CD4-positive, alpha-beta memory T cell (primary cell): ENCODE measurements at regions of chr7 and their contacts with region 1.

Region 1: DNA sequence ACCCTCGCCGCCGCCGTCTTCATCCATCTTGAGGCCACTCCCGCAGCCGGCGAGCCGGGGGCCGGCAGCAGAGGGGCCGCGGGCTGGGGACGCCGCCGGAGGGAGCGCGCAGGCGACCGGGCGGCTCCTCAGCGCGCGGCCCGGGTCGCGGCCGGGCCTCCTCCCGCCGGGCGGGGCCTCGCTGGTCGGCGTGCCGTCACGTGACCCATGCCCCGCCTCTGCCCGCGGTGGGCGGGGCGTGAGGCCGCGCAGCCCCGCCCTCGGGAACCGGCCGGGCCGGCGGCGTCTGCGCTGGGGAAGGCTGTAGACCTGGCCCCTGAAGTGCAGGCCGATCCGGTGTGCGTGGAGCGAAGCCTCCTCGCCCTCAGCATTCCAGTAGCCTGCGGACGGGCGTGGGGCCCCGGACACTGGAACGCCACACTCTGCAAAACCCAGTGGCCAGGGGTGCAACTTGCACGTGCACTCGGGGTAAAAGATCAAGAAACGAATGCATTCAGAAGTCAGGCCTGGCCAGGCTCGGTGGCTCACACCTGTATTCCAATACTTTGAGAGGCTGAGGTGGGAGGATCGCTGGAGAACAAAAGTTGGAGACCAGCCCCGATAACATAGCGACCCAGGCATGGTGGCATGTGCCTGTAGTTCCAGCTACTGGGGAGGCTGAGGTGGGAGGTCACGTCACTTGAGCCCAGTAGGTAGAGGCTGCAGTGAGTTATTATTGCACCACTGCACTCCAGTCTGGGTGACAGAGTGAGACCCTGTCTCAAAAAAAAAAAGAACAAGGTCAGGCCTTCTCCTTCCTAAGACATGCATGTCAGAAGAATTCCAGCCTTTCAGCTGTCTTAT is at the start of gene CYTH3:
- DNase-seq: peak; percentile 59 to 85 (median 77)
- H3K4me3 ChIP-seq: peak within 1 kb of the TSS; percentile 52 to 60
- H3K4me3 Mint-ChIP-seq: peak within 1 kb of the TSS; percentile 89 to 94 (median 93)
- H3K27ac ChIP-seq: peak within 1 kb of the TSS; percentile 34
- H3K27ac Mint-ChIP-seq: peak within 1 kb of the TSS; percentile 71 to 94 (median 81)
- H3K4me1 ChIP-seq: peaks cover 28% of the 10 kb centered on the region
- H3K4me1 Mint-ChIP-seq: peaks cover 15 to 37% (median 25%) of the 10 kb centered on the region in 4 donors
- H3K27me3 ChIP-seq: peaks cover 7% of the 10 kb centered on the region
- H3K27me3 Mint-ChIP-seq: peaks cover 6 to 8% of the 10 kb centered on the region in 2 donors
- total RNA-seq, gene CYTH3: 6.6 to 7.8 TPM

Region 2: GRCh38 chr7:5838761-5839500 is 433.8 kb before region 1 on chr7:
- CTCF ChIA-PET with region 1: no interaction called
- POLR2A ChIA-PET with region 1: no interaction called
- intact Hi-C with region 1: no loop called
- DNase-seq: no peak
- H3K4me3 ChIP-seq: no peak overlapping the region
- H3K4me3 Mint-ChIP-seq: peak overlapping the region; percentile 35 to 84 (median 58)
- H3K27ac ChIP-seq: no peak overlapping the region
- H3K27ac Mint-ChIP-seq: peak overlapping the region; percentile 31 to 96 (median 85)
- H3K4me1 ChIP-seq: peaks cover 40% of the 10 kb centered on the region
- H3K4me1 Mint-ChIP-seq: peaks cover 23 to 40% (median 27%) of the 10 kb centered on the region in 4 donors
- H3K27me3 ChIP-seq: no peaks in the 10 kb centered on the region
- H3K27me3 Mint-ChIP-seq: no peaks in the 10 kb centered on the region

Region 3: DNA sequence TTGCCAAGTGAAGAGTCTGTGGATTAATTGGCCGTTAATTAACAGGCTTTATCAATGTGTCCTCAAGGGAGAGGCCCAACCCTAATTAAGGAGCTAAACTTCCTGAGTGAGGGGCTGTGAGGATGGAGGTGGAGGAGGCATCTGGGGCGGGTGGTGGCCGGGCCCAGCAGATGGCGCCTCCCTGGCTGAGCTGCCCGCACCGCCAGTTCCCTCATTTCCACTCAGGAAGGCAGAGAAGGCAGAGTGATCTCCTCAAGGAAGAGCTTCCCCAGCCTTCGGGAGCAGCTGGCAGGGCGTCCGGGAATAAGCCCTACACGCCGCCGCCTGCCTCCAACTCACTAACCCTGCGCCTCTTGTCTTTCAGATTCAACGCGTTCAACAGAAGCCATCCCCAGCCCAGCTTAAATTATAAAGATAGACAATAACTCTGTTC is 112.5 kb before region 1 on chr7:
- CTCF ChIA-PET with region 1: no interaction called
- POLR2A ChIA-PET with region 1: no interaction called
- intact Hi-C with region 1: loop called (anchors 5 kb)
- DNase-seq: peak in 1 of 5 donors; percentile 10
- H3K4me3 ChIP-seq: no peak overlapping the region
- H3K4me3 Mint-ChIP-seq: no peak overlapping the region
- H3K27ac ChIP-seq: no peak overlapping the region
- H3K27ac Mint-ChIP-seq: peak overlapping the region in 1 of 7 donors; percentile 18
- H3K4me1 ChIP-seq: no peaks in the 10 kb centered on the region
- H3K4me1 Mint-ChIP-seq: peaks cover 3 to 12% (median 6%) of the 10 kb centered on the region in 4 donors
- H3K27me3 ChIP-seq: no peaks in the 10 kb centered on the region
- H3K27me3 Mint-ChIP-seq: no peaks in the 10 kb centered on the region

Region 4: GRCh38 chr7:6260291-6261187 is 12.2 kb before region 1 on chr7:
- CTCF ChIA-PET with region 1: interaction called, 16 read pairs
- POLR2A ChIA-PET with region 1: interaction called, 8 read pairs
- intact Hi-C with region 1: no loop called
- DNase-seq: no peak
- H3K4me3 ChIP-seq: no peak overlapping the region
- H3K4me3 Mint-ChIP-seq: peak overlapping the region in 2 of 8 donors; percentile 2 to 5
- H3K27ac ChIP-seq: no peak overlapping the region
- H3K27ac Mint-ChIP-seq: peak overlapping the region in 5 of 7 donors; percentile 47 to 83 (median 82)
- H3K4me1 ChIP-seq: peaks cover 40% of the 10 kb centered on the region
- H3K4me1 Mint-ChIP-seq: peaks cover 32 to 59% (median 49%) of the 10 kb centered on the region in 4 donors
- H3K27me3 ChIP-seq: no peaks in the 10 kb centered on the region
- H3K27me3 Mint-ChIP-seq: no peaks in the 10 kb centered on the region

Region 5: DNA sequence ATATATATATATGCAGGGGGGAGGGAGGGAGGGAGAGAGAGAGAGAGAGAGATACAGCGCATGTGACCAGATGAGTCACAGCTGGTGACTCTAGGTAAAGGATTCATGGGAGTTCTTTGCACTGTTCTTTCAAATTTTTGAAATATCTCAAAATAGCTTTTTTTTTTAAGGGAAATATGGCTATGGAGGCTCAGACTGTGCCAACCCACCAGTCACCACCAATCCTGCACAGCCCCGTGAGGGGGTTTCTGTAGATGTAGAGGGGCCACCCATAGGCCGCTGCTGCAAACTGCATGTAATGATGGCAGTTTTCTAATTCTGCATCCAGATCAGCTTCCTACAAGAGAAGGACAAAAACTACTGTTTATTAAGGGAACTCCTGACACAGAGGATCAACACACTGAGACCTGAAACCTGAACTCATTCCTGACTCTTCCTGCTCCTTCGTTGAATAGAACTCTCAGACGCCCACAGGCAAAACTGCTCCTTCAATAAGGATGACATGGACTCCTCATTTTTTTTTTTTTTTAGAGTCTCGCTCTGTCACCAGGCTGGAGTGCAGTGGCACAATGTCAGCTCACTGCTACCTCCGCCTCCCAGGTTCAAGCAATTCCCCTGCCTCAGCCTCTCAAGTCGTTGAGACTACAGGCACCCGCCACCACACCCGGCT is 157.7 kb after region 1 on chr7:
- CTCF ChIA-PET with region 1: no interaction called
- POLR2A ChIA-PET with region 1: no interaction called
- intact Hi-C with region 1: no loop called
- DNase-seq: no peak
- H3K4me3 ChIP-seq: no peak overlapping the region
- H3K4me3 Mint-ChIP-seq: no peak overlapping the region
- H3K27ac ChIP-seq: no peak overlapping the region
- H3K27ac Mint-ChIP-seq: peak overlapping the region in 1 of 7 donors; percentile 54
- H3K4me1 ChIP-seq: peaks cover 4% of the 10 kb centered on the region
- H3K4me1 Mint-ChIP-seq: peaks cover under 1 to 5% (median 3%) of the 10 kb centered on the region in 4 donors
- H3K27me3 ChIP-seq: no peaks in the 10 kb centered on the region
- H3K27me3 Mint-ChIP-seq: no peaks in the 10 kb centered on the region